Colonic mucosa (tissue), 4 donors: ENCODE measurements at regions of chr9 and their contacts with region 1.

Region 1: GRCh38 chr9:124771021-124771866 is at the start of gene NR6A1:
- DNase-seq: peak; percentile 98
- H3K4me3 ChIP-seq: peak within 1 kb of the TSS; percentile 82
- H3K27ac ChIP-seq: peak within 1 kb of the TSS; percentile 88
- H3K4me1 ChIP-seq: peaks cover 1% of the 10 kb centered on the region
- H3K27me3 ChIP-seq: peaks cover 4% of the 10 kb centered on the region
- CTCF ChIP-seq: no peak
- total RNA-seq, gene NR6A1: 4.8 to 4.9 TPM

Region 2: GRCh38 chr9:124652203-124652992 is 118.8 kb before region 1 on chr9:
- intact Hi-C with region 1: no loop called
- DNase-seq: no peak
- H3K4me3 ChIP-seq: no peak overlapping the region
- H3K27ac ChIP-seq: no peak overlapping the region
- H3K4me1 ChIP-seq: no peaks in the 10 kb centered on the region
- H3K27me3 ChIP-seq: no peaks in the 10 kb centered on the region
- CTCF ChIP-seq: no peak

Region 3: DNA sequence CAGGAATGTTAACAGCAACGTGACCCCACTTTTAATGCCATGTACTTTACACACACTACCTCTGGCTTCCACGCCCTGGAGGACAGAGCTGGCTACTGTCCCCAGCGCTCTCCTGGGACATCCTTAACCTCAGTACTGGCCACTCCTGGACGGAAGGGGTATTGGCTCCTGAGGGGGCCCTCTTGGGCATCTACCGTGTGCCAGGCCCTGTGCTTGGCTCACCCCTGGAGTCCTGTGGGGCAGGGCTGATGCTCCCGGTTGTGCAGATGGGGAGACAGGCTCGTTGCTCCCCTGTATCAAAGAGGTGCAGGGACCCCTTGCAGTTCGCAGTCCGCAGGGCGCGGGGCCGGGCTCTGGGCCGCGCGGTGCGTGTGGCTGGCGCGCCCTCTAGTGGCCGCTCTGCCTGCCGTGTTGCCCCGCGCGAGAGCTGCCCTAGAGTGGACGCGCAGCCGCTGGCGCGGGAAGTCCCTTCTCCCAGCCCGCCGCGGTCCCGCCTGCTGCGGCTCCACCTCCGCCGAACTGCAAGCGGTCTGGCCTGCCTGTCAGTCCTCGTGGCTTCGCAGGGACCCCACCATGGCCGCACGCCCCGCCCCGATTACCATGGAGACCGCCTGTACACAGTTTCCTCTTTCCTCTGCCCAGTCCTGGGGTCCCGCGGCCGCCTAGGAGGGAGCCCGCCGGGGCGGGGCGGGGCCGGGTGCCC is 81.7 kb after region 1 on chr9 and contains the start of gene WDR38:
- intact Hi-C with region 1: loop called (anchors 1 kb)
- DNase-seq: peak; percentile 64
- H3K4me3 ChIP-seq: peak within 1 kb of the TSS; percentile 44
- H3K27ac ChIP-seq: no peak within 1 kb of the TSS
- H3K4me1 ChIP-seq: no peaks in the 10 kb centered on the region
- H3K27me3 ChIP-seq: no peaks in the 10 kb centered on the region
- CTCF ChIP-seq: peak; percentile 96
- total RNA-seq, gene WDR38: not detected

Region 4: DNA sequence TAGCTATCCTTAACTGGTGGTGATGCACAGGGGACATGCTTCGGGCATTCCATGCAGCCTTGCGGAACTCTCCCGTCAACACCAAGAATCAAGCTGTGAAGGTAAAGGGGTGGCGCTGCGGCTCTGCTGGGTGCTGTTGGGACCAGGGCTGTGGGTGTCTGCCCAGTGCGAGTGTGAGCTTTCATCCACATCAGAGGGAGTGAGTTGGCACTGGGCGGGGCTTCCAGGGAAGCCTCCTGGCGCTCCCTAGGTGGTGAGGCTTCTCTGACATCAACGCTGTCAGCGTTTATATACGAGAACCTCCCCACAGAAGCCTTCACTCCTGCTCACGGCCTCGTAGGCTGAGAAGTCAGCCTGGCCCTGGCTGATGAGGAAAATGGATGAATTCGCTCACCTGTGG is 102.4 kb after region 1 on chr9:
- intact Hi-C with region 1: no loop called
- DNase-seq: no peak
- H3K4me3 ChIP-seq: no peak overlapping the region
- H3K27ac ChIP-seq: no peak overlapping the region
- H3K4me1 ChIP-seq: peaks cover 14% of the 10 kb centered on the region
- H3K27me3 ChIP-seq: no peaks in the 10 kb centered on the region
- CTCF ChIP-seq: no peak

Region 5: GRCh38 chr9:125143375-125144090 is 372.3 kb after region 1 on chr9 and contains the start of gene SCAI:
- intact Hi-C with region 1: loop called (anchors 10 kb)
- DNase-seq: peak; percentile 99
- H3K4me3 ChIP-seq: peak within 1 kb of the TSS; percentile 62
- H3K27ac ChIP-seq: no peak within 1 kb of the TSS
- H3K4me1 ChIP-seq: no peaks in the 10 kb centered on the region
- H3K27me3 ChIP-seq: no peaks in the 10 kb centered on the region
- CTCF ChIP-seq: peak; percentile 99
- total RNA-seq, gene SCAI: 6.7 to 8.3 TPM

Region 6: GRCh38 chr9:125374443-125375309 is 603.4 kb after region 1 on chr9:
- intact Hi-C with region 1: loop called (anchors 5 kb)
- DNase-seq: peak; percentile 63
- H3K4me3 ChIP-seq: peak overlapping the region; percentile 10
- H3K27ac ChIP-seq: no peak overlapping the region
- H3K4me1 ChIP-seq: no peaks in the 10 kb centered on the region
- H3K27me3 ChIP-seq: no peaks in the 10 kb centered on the region
- CTCF ChIP-seq: peak; percentile 75